ENCODE measurements at regions of chr4 and their contacts with region 1.

Region 1: DNA sequence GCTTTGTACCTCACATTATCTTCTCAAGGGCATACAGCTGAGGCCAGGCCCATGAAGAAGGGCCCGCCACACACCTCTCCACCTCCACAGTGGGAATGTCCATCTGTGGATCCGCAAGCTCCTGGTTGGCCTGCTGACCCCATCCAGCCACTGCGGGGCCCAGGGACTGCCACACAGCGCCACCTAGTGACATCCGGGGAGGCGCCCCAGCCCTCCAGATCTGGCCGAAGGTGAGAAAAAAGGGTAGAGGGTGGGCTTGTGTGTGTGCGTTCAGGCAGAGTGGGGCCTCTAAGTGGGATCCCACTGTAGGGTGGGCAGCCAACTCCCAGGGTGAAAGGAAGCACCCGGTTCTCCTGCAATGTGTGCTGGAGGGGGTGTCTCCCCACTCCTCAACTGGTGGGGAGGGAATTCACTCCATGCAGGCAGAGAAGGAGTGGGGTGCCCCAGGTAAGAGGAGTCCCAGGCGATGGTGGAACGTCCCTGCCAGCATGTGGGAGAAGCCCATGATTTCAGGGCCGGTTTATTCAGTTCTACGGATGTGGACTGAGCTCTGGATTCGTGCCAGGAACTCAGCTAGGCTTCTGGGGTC is 117.3 kb downstream of the ENPP6 start:
- DNase-seq: peak; percentile 60
- ATAC-seq: peak; percentile 66
- H3K4me3 Mint-ChIP-seq: no peak overlapping the region
- H3K27ac Mint-ChIP-seq: no peak overlapping the region
- H3K4me1 Mint-ChIP-seq: no peaks in the 10 kb centered on the region
- H3K27me3 Mint-ChIP-seq: peaks cover 16% of the 10 kb centered on the region
- CTCF ChIP-seq: peak; percentile 91

Region 2: GRCh38 chr4:183840311-183840710 is 260.1 kb before region 1 on chr4:
- CTCF ChIA-PET with region 1: interaction called, 7 read pairs
- POLR2A ChIA-PET with region 1: no interaction called
- intact Hi-C with region 1: loop called (anchors 2 kb)
- DNase-seq: peak; percentile 81
- ATAC-seq: peak; percentile 27
- H3K4me3 Mint-ChIP-seq: no peak overlapping the region
- H3K27ac Mint-ChIP-seq: no peak overlapping the region
- H3K4me1 Mint-ChIP-seq: no peaks in the 10 kb centered on the region
- H3K27me3 Mint-ChIP-seq: peaks cover 4% of the 10 kb centered on the region
- CTCF ChIP-seq: peak; percentile 87

Region 3: DNA sequence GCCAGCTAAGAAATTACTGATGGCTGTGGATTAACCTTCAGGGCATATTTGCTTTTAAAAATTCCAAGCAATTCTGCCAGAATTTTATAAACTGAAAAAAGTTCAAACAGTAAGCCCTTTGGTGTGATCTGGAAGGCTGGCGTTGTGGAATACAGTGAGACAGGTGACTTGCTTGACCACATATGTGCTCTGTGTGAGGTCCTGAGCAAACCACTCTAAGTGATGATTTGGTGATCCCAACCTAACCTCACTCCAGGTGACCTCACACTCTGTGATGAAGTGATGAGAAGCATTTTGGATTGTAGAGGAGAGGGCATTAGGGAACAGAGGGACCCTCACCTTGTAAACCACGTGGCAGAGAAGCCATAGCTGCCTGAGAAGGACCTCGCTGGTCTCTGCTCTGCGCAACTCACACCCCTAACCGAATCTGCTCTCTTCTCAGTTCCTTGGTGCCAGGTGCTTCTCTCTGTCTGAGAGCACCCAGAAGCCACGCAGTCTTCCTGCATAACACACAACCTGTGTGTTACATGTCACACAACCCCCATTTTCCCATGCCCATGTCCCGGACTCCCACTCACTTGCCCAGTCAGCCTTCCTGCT is 10.9 kb after region 1 on chr4:
- CTCF ChIA-PET with region 1: interaction called, 21 read pairs
- POLR2A ChIA-PET with region 1: interaction called, 4 read pairs
- intact Hi-C with region 1: no loop called
- DNase-seq: no peak
- ATAC-seq: no peak
- H3K4me3 Mint-ChIP-seq: no peak overlapping the region
- H3K27ac Mint-ChIP-seq: no peak overlapping the region
- H3K4me1 Mint-ChIP-seq: no peaks in the 10 kb centered on the region
- H3K27me3 Mint-ChIP-seq: no peaks in the 10 kb centered on the region
- CTCF ChIP-seq: no peak

Region 4: GRCh38 chr4:184147858-184148737 is 47.7 kb after region 1 on chr4:
- CTCF ChIA-PET with region 1: no interaction called
- POLR2A ChIA-PET with region 1: no interaction called
- intact Hi-C with region 1: no loop called
- DNase-seq: no peak
- ATAC-seq: no peak
- H3K4me3 Mint-ChIP-seq: no peak overlapping the region
- H3K27ac Mint-ChIP-seq: no peak overlapping the region
- H3K4me1 Mint-ChIP-seq: no peaks in the 10 kb centered on the region
- H3K27me3 Mint-ChIP-seq: peaks cover 5% of the 10 kb centered on the region
- CTCF ChIP-seq: no peak

Region 5: DNA sequence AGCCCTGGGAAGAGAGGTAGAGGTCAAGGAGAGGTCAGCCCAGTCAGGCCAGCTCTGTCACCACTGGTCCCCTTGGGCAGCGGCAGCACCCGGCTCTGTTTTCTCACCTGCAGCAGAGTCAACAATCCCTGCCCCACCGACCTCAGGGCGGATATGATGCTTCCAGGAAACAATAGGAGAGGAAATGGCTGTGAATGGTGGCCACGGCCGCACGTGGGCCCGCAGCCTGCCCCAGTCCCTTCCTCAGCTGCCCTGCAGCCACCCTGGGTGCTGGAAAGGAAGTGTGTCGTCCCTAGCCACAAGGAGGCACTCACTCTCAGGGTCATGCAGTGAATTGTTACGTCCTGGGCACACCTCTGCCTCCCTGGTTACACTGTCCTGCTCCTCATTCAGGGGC is 209.8 kb after region 1 on chr4:
- CTCF ChIA-PET with region 1: no interaction called
- POLR2A ChIA-PET with region 1: no interaction called
- intact Hi-C with region 1: no loop called
- DNase-seq: peak; percentile 72
- ATAC-seq: peak; percentile 51
- H3K4me3 Mint-ChIP-seq: peak overlapping the region; percentile 18
- H3K27ac Mint-ChIP-seq: peak overlapping the region; percentile 88
- H3K4me1 Mint-ChIP-seq: peaks cover 68% of the 10 kb centered on the region
- H3K27me3 Mint-ChIP-seq: no peaks in the 10 kb centered on the region
- CTCF ChIP-seq: peak; percentile 60